CD4-positive, alpha-beta memory T cell (primary cell): ENCODE measurements at regions of chr2 and their contacts with region 1.

Region 1: GRCh38 chr2:85642725-85643124 is 25.3 kb downstream of the SFTPB start:
- DNase-seq: peak in 1 of 5 donors; percentile 8
- H3K4me3 ChIP-seq: no peak overlapping the region
- H3K4me3 Mint-ChIP-seq: peak overlapping the region in 4 of 8 donors; percentile 2 to 52 (median 23)
- H3K27ac ChIP-seq: no peak overlapping the region
- H3K27ac Mint-ChIP-seq: peak overlapping the region; percentile 6 to 90 (median 57)
- H3K4me1 ChIP-seq: no peaks in the 10 kb centered on the region
- H3K4me1 Mint-ChIP-seq: peaks cover 6 to 13% (median 10%) of the 10 kb centered on the region in 4 donors
- H3K27me3 ChIP-seq: no peaks in the 10 kb centered on the region
- H3K27me3 Mint-ChIP-seq: no peaks in the 10 kb centered on the region

Region 2: DNA sequence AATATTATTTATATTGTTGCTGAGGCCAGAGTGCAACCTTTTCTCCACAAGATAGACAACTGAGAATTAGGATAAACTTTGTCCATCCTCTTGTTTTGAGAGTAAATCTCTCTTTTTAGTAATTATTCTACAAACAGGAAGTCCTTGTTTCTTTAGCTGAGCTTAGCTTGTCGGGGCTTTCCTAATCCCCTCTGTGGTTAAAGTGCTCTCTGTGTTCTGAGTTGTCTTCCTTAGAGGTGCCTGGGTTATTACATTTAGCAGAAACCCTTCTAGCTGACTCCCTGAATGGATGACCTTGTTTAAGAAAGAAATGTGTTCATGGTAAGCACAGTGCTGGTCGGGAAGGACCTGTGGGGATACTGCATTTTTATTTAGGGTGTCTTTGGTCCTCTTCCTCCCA is 14.1 kb before region 1 on chr2:
- CTCF ChIA-PET with region 1: interaction called, 68 read pairs
- POLR2A ChIA-PET with region 1: no interaction called
- intact Hi-C with region 1: no loop called
- DNase-seq: no peak
- H3K4me3 ChIP-seq: no peak overlapping the region
- H3K4me3 Mint-ChIP-seq: no peak overlapping the region
- H3K27ac ChIP-seq: no peak overlapping the region
- H3K27ac Mint-ChIP-seq: peak overlapping the region in 2 of 7 donors; percentile 4 to 46
- H3K4me1 ChIP-seq: peaks cover 6% of the 10 kb centered on the region
- H3K4me1 Mint-ChIP-seq: peaks cover 0 to 12% (median 3%) of the 10 kb centered on the region in 4 donors
- H3K27me3 ChIP-seq: no peaks in the 10 kb centered on the region
- H3K27me3 Mint-ChIP-seq: no peaks in the 10 kb centered on the region

Region 3: GRCh38 chr2:85659324-85659981 is 16.7 kb after region 1 on chr2:
- CTCF ChIA-PET with region 1: interaction called, 17 read pairs
- POLR2A ChIA-PET with region 1: no interaction called
- intact Hi-C with region 1: no loop called
- DNase-seq: no peak
- H3K4me3 ChIP-seq: no peak overlapping the region
- H3K4me3 Mint-ChIP-seq: no peak overlapping the region
- H3K27ac ChIP-seq: no peak overlapping the region
- H3K27ac Mint-ChIP-seq: no peak overlapping the region
- H3K4me1 ChIP-seq: no peaks in the 10 kb centered on the region
- H3K4me1 Mint-ChIP-seq: no peaks in the 10 kb centered on the region
- H3K27me3 ChIP-seq: no peaks in the 10 kb centered on the region
- H3K27me3 Mint-ChIP-seq: no peaks in the 10 kb centered on the region

Region 4: DNA sequence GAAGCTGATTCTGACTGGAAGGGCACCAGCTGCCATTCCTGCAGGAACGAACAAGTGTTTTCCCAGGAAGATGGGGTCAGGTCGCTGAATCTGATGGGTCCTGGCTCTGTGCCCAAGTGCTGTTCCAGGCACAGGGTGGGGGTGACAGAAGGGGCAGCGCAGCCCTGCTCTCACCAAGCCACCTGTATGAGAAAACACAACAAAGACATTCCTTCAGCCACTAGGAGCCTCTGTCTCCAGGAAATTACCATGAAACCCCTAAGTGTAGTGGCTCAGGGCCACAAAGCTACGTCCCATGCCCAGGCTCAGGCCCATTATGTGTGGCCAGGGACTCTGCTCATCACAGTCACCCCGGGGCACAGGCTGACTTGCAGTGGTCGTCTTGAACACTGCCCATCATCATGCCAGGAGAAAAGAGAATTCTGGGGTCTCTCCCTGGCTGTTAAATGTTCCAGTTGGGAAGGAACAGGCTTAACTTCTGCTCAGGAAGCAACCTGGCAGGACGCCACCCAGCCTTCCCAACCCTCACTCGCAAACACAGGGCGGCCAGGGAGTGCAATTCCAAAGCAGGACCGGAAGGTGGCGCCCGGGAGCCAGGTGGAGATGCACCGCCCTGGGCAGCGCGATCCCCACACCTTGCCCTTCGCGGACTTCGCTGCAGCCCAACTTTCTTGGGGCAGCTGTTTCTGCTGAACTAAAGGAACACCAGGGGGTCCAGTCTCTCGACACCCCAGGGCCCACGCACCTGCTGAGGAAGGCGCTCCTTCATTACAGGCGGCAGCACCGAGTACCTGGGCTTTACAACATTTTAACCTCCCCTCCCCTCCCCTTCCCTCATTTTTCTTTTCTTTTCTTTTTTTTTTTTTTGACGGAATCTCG is 36.3 kb after region 1 on chr2:
- CTCF ChIA-PET with region 1: no interaction called
- POLR2A ChIA-PET with region 1: no interaction called
- intact Hi-C with region 1: no loop called
- DNase-seq: peak; percentile 64 to 75 (median 68)
- H3K4me3 ChIP-seq: no peak overlapping the region
- H3K4me3 Mint-ChIP-seq: peak overlapping the region in 5 of 8 donors; percentile 20 to 52 (median 33)
- H3K27ac ChIP-seq: no peak overlapping the region
- H3K27ac Mint-ChIP-seq: no peak overlapping the region
- H3K4me1 ChIP-seq: peaks cover 4% of the 10 kb centered on the region
- H3K4me1 Mint-ChIP-seq: peaks cover 0 to 5% (median under 1%) of the 10 kb centered on the region in 4 donors
- H3K27me3 ChIP-seq: no peaks in the 10 kb centered on the region
- H3K27me3 Mint-ChIP-seq: peaks cover 0 to 2% of the 10 kb centered on the region in 2 donors

Region 5: GRCh38 chr2:85694052-85695025 is 51.6 kb after region 1 on chr2 and contains the start of gene GNLY:
- CTCF ChIA-PET with region 1: no interaction called
- POLR2A ChIA-PET with region 1: no interaction called
- intact Hi-C with region 1: no loop called
- DNase-seq: peak in 1 of 5 donors; percentile 21
- H3K4me3 ChIP-seq: no peak within 1 kb of the TSS
- H3K4me3 Mint-ChIP-seq: peak within 1 kb of the TSS in 3 of 8 donors; percentile 42 to 71 (median 64)
- H3K27ac ChIP-seq: peak within 1 kb of the TSS; percentile 20
- H3K27ac Mint-ChIP-seq: peak within 1 kb of the TSS in 4 of 7 donors; percentile 46 to 78 (median 62)
- H3K4me1 ChIP-seq: no peaks in the 10 kb centered on the region
- H3K4me1 Mint-ChIP-seq: no peaks in the 10 kb centered on the region
- H3K27me3 ChIP-seq: no peaks in the 10 kb centered on the region
- H3K27me3 Mint-ChIP-seq: no peaks in the 10 kb centered on the region
- total RNA-seq, gene GNLY: 17.2 to 20.0 TPM